ENCODE measurements at regions of chr9 and their contacts with region 1.

Region 1: DNA sequence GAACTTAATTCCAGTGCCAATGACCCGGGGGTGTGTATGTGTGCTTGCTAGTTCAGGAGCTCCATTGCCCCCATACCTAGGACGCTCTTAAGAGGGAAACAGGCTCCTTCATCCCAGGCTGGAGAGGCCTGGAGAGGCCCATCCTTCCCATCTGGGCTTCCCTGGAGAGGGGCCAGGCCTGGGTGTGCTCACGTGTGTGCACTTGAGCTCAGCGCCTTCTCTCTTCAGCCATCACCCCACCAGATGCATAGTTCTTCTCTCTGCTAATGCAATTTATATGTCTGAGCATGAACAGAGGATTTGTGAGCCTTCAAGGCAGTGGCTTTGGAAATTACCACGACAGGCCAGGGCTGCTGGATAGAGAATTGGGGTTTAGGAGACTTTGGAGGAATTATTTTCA is 48.6 kb upstream of the SHB start:
- DNase-seq: no peak

Region 2: DNA sequence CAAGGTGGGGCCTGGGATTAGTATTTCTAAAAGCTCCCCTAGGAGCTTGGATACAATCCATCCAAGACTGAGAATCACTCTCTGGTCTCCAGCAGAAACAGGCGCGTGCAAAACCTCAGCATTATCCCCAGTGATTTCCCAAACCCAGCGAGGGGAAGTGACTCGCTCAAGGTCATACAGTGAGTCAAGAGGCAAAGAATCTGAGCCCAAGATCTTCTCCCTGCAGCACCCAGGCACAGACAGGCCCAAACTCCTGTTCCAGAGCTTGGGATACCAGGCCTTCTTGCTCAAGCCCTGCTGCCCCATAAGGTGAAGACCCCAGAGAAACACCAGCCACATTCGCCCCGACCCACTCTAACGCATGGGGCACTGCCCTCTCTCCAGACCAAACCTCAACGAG is 81.8 kb before region 1 on chr9:
- intact Hi-C with region 1: no loop called
- DNase-seq: no peak

Region 3: GRCh38 chr9:38160613-38161215 is 43.1 kb after region 1 on chr9:
- intact Hi-C with region 1: loop called (anchors 10 kb)
- DNase-seq: peak in 3 of 10 donors; percentile 14 to 69 (median 60)

Region 4: GRCh38 chr9:38423973-38424843 is 306.6 kb after region 1 on chr9 and contains the start of gene IGFBPL1:
- intact Hi-C with region 1: no loop called
- DNase-seq: peak in 4 of 10 donors; percentile 9 to 90 (median 54)